CD4-positive, alpha-beta T cell (primary cell): ENCODE measurements at regions of chr4 and their contacts with region 1.

Region 1: DNA sequence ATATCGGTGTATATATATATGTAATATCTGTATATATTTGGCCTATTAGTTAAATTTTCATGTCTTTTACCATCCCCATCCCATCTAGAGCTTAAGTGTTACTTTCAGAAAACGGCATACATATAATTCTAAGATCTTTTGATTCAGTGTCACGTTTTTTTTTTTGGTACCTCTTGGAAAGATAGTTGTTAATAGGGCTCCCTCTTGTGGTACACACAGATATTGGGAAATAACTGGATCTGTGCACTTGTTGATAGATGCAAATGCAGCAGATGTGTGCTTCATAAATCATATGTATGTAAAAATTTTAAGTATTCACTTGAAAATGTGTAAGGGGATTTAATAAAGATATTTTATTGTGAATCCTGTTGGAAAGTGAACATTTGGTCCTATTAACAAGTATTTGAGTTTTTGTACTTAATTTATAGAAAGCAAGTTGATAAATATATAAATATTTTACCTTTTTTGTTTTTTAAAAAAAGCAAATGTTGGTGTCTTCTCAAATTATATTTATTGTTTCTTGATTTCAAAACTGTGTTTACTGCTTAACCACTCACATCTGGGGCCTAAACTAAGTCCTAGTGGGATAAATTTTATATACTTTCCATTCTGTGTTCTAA is 74.7 kb downstream of the PAQR3 start:
- DNase-seq: peak in 5 of 14 experiments; percentile 2 to 79 (median 67)
- ATAC-seq: peak; percentile 55
- H3K4me3 ChIP-seq: no peak overlapping the region
- H3K4me3 Mint-ChIP-seq: no peak overlapping the region
- H3K27ac ChIP-seq: no peak overlapping the region
- H3K27ac Mint-ChIP-seq: no peak overlapping the region
- H3K4me1 ChIP-seq: no peaks in the 10 kb centered on the region
- H3K4me1 Mint-ChIP-seq: peaks cover 5% of the 10 kb centered on the region
- H3K27me3 ChIP-seq: no peaks in the 10 kb centered on the region
- H3K27me3 Mint-ChIP-seq: no peaks in the 10 kb centered on the region
- CTCF ChIP-seq: peak; percentile 88

Region 2: GRCh38 chr4:77385124-77385969 is 1479.2 kb before region 1 on chr4:
- CTCF ChIA-PET with region 1: no interaction called
- POLR2A ChIA-PET with region 1: no interaction called
- intact Hi-C with region 1: loop called (anchors 2 to 10 kb)
- DNase-seq: peak; percentile 16 to 64 (median 30)
- ATAC-seq: no peak
- H3K4me3 ChIP-seq: no peak overlapping the region
- H3K4me3 Mint-ChIP-seq: no peak overlapping the region
- H3K27ac ChIP-seq: no peak overlapping the region
- H3K27ac Mint-ChIP-seq: no peak overlapping the region
- H3K4me1 ChIP-seq: no peaks in the 10 kb centered on the region
- H3K4me1 Mint-ChIP-seq: no peaks in the 10 kb centered on the region
- H3K27me3 ChIP-seq: no peaks in the 10 kb centered on the region
- H3K27me3 Mint-ChIP-seq: peaks cover 4% of the 10 kb centered on the region
- CTCF ChIP-seq: peak; percentile 71

Region 3: GRCh38 chr4:77959566-77960338 is 904.8 kb before region 1 on chr4:
- CTCF ChIA-PET with region 1: no interaction called
- POLR2A ChIA-PET with region 1: no interaction called
- intact Hi-C with region 1: loop called (anchors 1 to 2 kb)
- DNase-seq: peak in 3 of 14 experiments; percentile 30 to 54 (median 45)
- ATAC-seq: no peak
- H3K4me3 ChIP-seq: no peak overlapping the region
- H3K4me3 Mint-ChIP-seq: no peak overlapping the region
- H3K27ac ChIP-seq: no peak overlapping the region
- H3K27ac Mint-ChIP-seq: no peak overlapping the region
- H3K4me1 ChIP-seq: no peaks in the 10 kb centered on the region
- H3K4me1 Mint-ChIP-seq: peaks cover 7% of the 10 kb centered on the region
- H3K27me3 ChIP-seq: no peaks in the 10 kb centered on the region
- H3K27me3 Mint-ChIP-seq: no peaks in the 10 kb centered on the region
- CTCF ChIP-seq: peak; percentile 72

Region 4: DNA sequence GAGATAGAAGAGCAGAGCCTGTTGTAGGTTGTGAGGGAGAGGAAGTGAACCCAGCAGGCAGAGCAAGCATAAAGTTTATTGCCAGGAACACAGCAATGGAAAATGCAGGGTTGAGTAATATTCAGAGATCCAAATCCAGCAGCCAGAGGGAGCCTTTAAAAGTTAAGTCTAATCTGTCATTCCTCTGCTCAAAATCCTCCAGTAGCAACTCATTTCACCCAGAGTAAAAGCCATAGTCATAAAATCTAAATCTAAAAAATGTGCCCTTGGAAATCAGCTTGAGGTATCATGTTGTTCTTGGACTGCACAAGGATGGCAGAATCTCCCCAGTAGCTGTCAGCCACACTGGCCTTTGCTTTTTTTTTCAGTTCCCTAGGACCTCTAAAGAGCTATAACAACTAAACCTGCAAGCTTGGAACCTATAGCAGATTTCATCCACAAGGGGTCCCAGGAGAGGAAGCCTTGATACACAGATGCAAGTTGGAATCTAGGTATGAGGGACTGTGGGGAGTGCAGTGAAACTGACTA is 870.3 kb before region 1 on chr4:
- CTCF ChIA-PET with region 1: no interaction called
- POLR2A ChIA-PET with region 1: no interaction called
- intact Hi-C with region 1: loop called in 1 of 2 experiments (anchors 1 kb)
- DNase-seq: peak in 4 of 14 experiments; percentile 2 to 24 (median 8)
- ATAC-seq: no peak
- H3K4me3 ChIP-seq: no peak overlapping the region
- H3K4me3 Mint-ChIP-seq: no peak overlapping the region
- H3K27ac ChIP-seq: no peak overlapping the region
- H3K27ac Mint-ChIP-seq: no peak overlapping the region
- H3K4me1 ChIP-seq: no peaks in the 10 kb centered on the region
- H3K4me1 Mint-ChIP-seq: no peaks in the 10 kb centered on the region
- H3K27me3 ChIP-seq: peaks cover 0 to under 1% of the 10 kb centered on the region in 2 experiments
- H3K27me3 Mint-ChIP-seq: peaks cover 10% of the 10 kb centered on the region
- CTCF ChIP-seq: peak; percentile 8

Region 5: GRCh38 chr4:78612398-78613178 is 251.9 kb before region 1 on chr4:
- CTCF ChIA-PET with region 1: no interaction called
- POLR2A ChIA-PET with region 1: no interaction called
- intact Hi-C with region 1: loop called (anchors 1 kb)
- DNase-seq: peak in 4 of 14 experiments; percentile 22 to 38 (median 33)
- ATAC-seq: no peak
- H3K4me3 ChIP-seq: no peak overlapping the region
- H3K4me3 Mint-ChIP-seq: no peak overlapping the region
- H3K27ac ChIP-seq: no peak overlapping the region
- H3K27ac Mint-ChIP-seq: peak overlapping the region; percentile 37
- H3K4me1 ChIP-seq: peaks cover 4% of the 10 kb centered on the region
- H3K4me1 Mint-ChIP-seq: peaks cover 61% of the 10 kb centered on the region
- H3K27me3 ChIP-seq: no peaks in the 10 kb centered on the region
- H3K27me3 Mint-ChIP-seq: no peaks in the 10 kb centered on the region
- CTCF ChIP-seq: peak; percentile 49

Region 6: DNA sequence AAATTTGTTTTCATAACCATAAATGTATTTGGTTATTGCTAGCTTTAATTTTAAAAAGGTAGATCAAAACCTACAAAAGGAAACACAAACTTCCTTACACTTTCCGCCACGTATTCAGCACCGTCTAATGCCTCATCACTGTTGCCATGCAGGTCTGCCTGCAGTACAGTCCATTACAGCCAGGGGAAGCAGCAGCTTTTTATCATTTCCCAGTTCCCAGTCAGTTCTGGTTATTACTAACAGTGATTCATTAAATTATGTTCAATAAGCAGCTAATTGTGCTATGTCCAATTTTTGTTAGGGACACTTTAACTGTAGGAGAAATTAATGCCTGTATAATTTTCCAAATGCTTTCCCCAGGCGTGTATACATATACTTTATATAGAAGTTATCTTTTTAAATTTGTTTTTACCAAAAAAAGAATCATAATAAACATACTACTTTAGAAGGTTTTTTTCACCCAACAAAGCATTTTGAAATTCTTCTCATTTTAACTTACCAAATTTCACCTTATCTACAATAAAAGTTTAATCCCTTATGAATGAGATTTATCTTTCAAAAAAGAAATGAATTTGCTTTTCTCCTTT is 219.7 kb before region 1 on chr4:
- CTCF ChIA-PET with region 1: no interaction called
- POLR2A ChIA-PET with region 1: no interaction called
- intact Hi-C with region 1: loop called (anchors 1 to 10 kb)
- DNase-seq: peak; percentile 12 to 74 (median 34)
- ATAC-seq: peak; percentile 99
- H3K4me3 ChIP-seq: no peak overlapping the region
- H3K4me3 Mint-ChIP-seq: no peak overlapping the region
- H3K27ac ChIP-seq: no peak overlapping the region
- H3K27ac Mint-ChIP-seq: no peak overlapping the region
- H3K4me1 ChIP-seq: no peaks in the 10 kb centered on the region
- H3K4me1 Mint-ChIP-seq: peaks cover 5% of the 10 kb centered on the region
- H3K27me3 ChIP-seq: no peaks in the 10 kb centered on the region
- H3K27me3 Mint-ChIP-seq: no peaks in the 10 kb centered on the region
- CTCF ChIP-seq: peak; percentile 80

Region 7: DNA sequence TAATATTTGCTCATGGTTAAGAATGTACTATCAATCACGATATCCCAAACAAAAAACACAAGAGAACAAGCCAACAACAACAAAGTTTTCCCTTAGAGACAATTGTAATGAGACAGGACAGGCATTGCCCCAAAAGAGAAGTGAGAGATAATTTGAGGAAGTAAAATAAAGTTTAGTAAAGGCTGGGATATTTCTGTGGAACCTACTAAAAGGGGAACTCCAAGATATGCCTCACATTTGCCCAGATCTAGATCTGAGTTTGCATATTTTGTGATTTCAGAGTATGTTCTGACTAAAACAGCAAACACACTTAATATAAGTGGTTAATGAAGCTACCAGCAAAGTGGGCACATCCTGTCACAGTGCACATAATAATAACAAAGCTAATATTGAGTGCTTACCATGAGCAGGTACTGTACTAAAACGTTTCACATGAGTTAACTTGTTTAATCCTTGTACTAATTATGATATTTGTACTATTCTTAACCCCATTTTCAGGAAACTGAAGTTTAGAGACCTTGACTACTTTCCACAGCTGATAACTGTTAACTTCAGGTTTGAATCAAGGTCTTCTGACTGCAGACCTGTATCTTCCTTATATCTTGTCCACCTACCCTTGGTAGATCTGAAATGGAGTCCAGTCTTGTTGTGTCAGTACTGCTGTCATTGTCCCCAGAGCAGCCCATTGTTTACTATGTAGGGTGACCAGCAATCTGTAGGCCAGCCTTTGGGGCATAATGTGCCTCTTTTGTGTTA is 114.4 kb before region 1 on chr4:
- CTCF ChIA-PET with region 1: no interaction called
- POLR2A ChIA-PET with region 1: no interaction called
- intact Hi-C with region 1: no loop called
- DNase-seq: peak in 3 of 14 experiments; percentile 1 to 47 (median 39)
- ATAC-seq: no peak
- H3K4me3 ChIP-seq: no peak overlapping the region
- H3K4me3 Mint-ChIP-seq: no peak overlapping the region
- H3K27ac ChIP-seq: no peak overlapping the region
- H3K27ac Mint-ChIP-seq: no peak overlapping the region
- H3K4me1 ChIP-seq: no peaks in the 10 kb centered on the region
- H3K4me1 Mint-ChIP-seq: no peaks in the 10 kb centered on the region
- H3K27me3 ChIP-seq: no peaks in the 10 kb centered on the region
- H3K27me3 Mint-ChIP-seq: no peaks in the 10 kb centered on the region
- CTCF ChIP-seq: no peak

Region 8: GRCh38 chr4:78775303-78776030 is 89.0 kb before region 1 on chr4:
- CTCF ChIA-PET with region 1: interaction called, 3 read pairs
- POLR2A ChIA-PET with region 1: no interaction called
- intact Hi-C with region 1: loop called (anchors 5 kb)
- DNase-seq: peak; percentile 74 to 93 (median 85)
- ATAC-seq: peak; percentile 61
- H3K4me3 ChIP-seq: peak overlapping the region; percentile 94
- H3K4me3 Mint-ChIP-seq: peak overlapping the region; percentile 96
- H3K27ac ChIP-seq: peak overlapping the region; percentile 72 to 87
- H3K27ac Mint-ChIP-seq: peak overlapping the region; percentile 90
- H3K4me1 ChIP-seq: peaks cover 15% of the 10 kb centered on the region
- H3K4me1 Mint-ChIP-seq: peaks cover 20% of the 10 kb centered on the region
- H3K27me3 ChIP-seq: no peaks in the 10 kb centered on the region
- H3K27me3 Mint-ChIP-seq: no peaks in the 10 kb centered on the region
- CTCF ChIP-seq: no peak

Region 9: GRCh38 chr4:78889955-78890354 is 25.4 kb after region 1 on chr4:
- CTCF ChIA-PET with region 1: no interaction called
- POLR2A ChIA-PET with region 1: no interaction called
- intact Hi-C with region 1: no loop called
- DNase-seq: no peak
- ATAC-seq: no peak
- H3K4me3 ChIP-seq: no peak overlapping the region
- H3K4me3 Mint-ChIP-seq: no peak overlapping the region
- H3K27ac ChIP-seq: no peak overlapping the region
- H3K27ac Mint-ChIP-seq: no peak overlapping the region
- H3K4me1 ChIP-seq: no peaks in the 10 kb centered on the region
- H3K4me1 Mint-ChIP-seq: peaks cover 7% of the 10 kb centered on the region
- H3K27me3 ChIP-seq: no peaks in the 10 kb centered on the region
- H3K27me3 Mint-ChIP-seq: no peaks in the 10 kb centered on the region
- CTCF ChIP-seq: no peak